Activated T-helper 1 cell treated with anti-CD3 and anti-CD28 coated beads, Interleukin-12 subunit alpha, Interleukin-12 subunit beta, Interleukin-2, Interleukin-4 antibody, amounts not matched to agents 30 ng/mL and 10 ng/mL and 1 ng/mL, durations not matched to agents 14 hours and 24 hours and 36 hours (primary cell): ENCODE measurements at regions of chr9 and their contacts with region 1.

Region 1: DNA sequence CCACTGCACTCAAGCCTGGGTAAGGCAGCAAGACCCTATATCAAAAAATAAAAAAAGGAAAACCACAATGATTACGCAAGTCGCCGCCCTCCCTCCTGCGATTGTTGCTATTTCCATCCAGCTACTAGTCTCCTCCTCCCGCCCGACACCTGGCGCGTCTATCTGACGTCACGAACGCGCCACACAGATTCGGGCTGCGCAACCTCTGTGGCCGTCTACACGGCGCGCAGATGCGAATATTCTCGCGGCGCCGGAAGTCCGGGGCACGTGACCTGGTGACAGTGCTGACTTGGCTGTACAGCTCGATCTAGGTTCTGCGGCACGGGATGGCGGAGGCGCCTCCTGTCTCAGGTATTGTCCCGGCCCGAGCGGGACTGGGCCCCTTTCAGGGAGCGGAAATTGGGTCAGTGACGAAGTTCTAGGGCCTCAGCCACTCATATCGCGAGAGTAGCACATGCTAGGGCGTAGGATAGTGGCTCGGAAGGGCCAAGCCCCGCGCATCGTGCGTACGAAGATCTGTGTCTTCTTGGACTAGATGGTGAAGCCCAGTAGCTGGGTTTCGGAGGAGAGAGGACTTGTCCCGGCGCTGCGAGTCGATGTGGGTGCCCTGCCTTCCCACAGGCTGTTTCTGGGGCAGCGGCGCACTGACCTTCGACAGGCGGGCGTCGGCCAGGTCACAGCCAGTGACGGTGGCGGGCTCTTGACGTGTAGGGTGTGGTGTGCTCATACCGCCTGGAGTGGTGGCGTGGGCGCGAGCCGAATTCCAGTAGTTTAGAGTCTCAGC is at the start of gene NFX1:
- DNase-seq: peak; percentile 98
- H3K4me3 Mint-ChIP-seq: peak within 1 kb of the TSS; percentile 93
- H3K27ac Mint-ChIP-seq: peak within 1 kb of the TSS; percentile 100
- H3K4me1 Mint-ChIP-seq: peaks cover 54% of the 10 kb centered on the region
- H3K27me3 Mint-ChIP-seq: no peaks in the 10 kb centered on the region
- total RNA-seq, gene NFX1: 36.2 and 37.6 TPM in 2 replicates

Region 2: GRCh38 chr9:33024966-33025571 is 265.4 kb before region 1 on chr9 and contains the start of gene DNAJA1:
- intact Hi-C with region 1: loop called (anchors 1 kb)
- DNase-seq: peak; percentile 95
- H3K4me3 Mint-ChIP-seq: peak within 1 kb of the TSS; percentile 94
- H3K27ac Mint-ChIP-seq: peak within 1 kb of the TSS; percentile 98
- H3K4me1 Mint-ChIP-seq: peaks cover 68% of the 10 kb centered on the region
- H3K27me3 Mint-ChIP-seq: no peaks in the 10 kb centered on the region
- total RNA-seq, gene DNAJA1: 296 and 312 TPM in 2 replicates

Region 3: GRCh38 chr9:33264473-33265177 is 25.8 kb before region 1 on chr9 and contains the starts of genes BAG1 and CHMP5:
- intact Hi-C with region 1: loop called (anchors 1 kb)
- DNase-seq: peak; percentile 99
- H3K4me3 Mint-ChIP-seq: peak within 1 kb of the TSS; percentile 96
- H3K27ac Mint-ChIP-seq: peak within 1 kb of the TSS; percentile 94
- H3K4me1 Mint-ChIP-seq: peaks cover 58% of the 10 kb centered on the region
- H3K27me3 Mint-ChIP-seq: no peaks in the 10 kb centered on the region
- total RNA-seq, gene BAG1: 75.0 and 78.2 TPM in 2 replicates
- total RNA-seq, gene CHMP5: 70.7 and 76.7 TPM in 2 replicates

Region 4: GRCh38 chr9:33346564-33346963 is 56.1 kb after region 1 on chr9:
- intact Hi-C with region 1: loop called (anchors 2 kb)
- DNase-seq: no peak
- H3K4me3 Mint-ChIP-seq: no peak overlapping the region
- H3K27ac Mint-ChIP-seq: no peak overlapping the region
- H3K4me1 Mint-ChIP-seq: peaks cover 5% of the 10 kb centered on the region
- H3K27me3 Mint-ChIP-seq: no peaks in the 10 kb centered on the region

Region 5: DNA sequence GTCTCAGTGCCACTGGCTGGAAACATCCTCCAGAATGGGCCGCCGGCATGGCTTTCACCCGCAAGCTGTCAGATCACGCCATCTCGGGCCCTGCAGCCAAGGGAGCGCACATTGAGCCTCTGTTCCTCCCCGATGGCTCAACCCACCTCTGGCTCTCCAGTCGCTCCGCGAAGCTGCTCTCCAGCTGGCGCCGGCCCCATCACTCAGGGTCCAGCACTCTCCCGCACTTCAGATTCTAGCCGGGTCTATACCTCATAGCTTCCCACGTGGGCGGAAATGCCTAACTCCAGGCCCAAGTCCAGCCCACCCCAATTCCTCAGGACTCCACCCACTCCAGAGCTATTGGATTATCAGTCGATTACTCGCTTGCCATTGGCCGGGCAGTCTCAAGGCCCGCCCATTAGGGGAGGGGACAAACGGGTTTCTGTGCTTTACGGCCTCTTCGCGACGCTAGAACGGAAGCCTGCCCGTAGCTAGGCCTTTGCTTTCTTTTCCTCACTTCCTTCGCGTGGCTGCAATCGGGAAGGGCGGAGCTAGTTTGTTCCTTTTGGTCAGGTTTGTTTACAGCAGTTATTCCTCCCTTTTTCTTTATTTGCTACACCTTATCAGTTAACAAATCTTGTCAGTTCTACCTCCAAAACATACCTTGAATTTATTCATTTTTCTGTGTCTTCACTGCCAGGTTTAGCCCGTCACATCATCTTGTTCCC is 183.4 kb after region 1 on chr9 and contains the start of gene NOL6:
- intact Hi-C with region 1: loop called (anchors 1 kb)
- DNase-seq: peak; percentile 98
- H3K4me3 Mint-ChIP-seq: peak within 1 kb of the TSS; percentile 98
- H3K27ac Mint-ChIP-seq: peak within 1 kb of the TSS; percentile 96
- H3K4me1 Mint-ChIP-seq: peaks cover 20% of the 10 kb centered on the region
- H3K27me3 Mint-ChIP-seq: no peaks in the 10 kb centered on the region
- total RNA-seq, gene NOL6: 87.3 and 90.1 TPM in 2 replicates